A673 (cell line): ENCODE measurements at regions of chr2 and their contacts with region 1.

Region 1: GRCh38 chr2:3558205-3559014 is at the start of gene RNASEH1:
- DNase-seq: peak; percentile 99
- H3K4me3 ChIP-seq: peak within 1 kb of the TSS; percentile 99
- H3K27ac ChIP-seq: peak within 1 kb of the TSS; percentile 95
- H3K4me1 ChIP-seq: no peaks in the 10 kb centered on the region
- H3K27me3 ChIP-seq: no peaks in the 10 kb centered on the region
- CTCF ChIP-seq: no peak
- total RNA-seq, gene RNASEH1: 45.3 and 48.3 TPM in 2 replicates

Region 2: GRCh38 chr2:3545788-3546478 is 12.5 kb before region 1 on chr2:
- CTCF ChIA-PET with region 1: no interaction called
- POLR2A ChIA-PET with region 1: interaction called, 11 read pairs
- intact Hi-C with region 1: no loop called
- DNase-seq: no peak
- H3K4me3 ChIP-seq: no peak overlapping the region
- H3K27ac ChIP-seq: no peak overlapping the region
- H3K4me1 ChIP-seq: no peaks in the 10 kb centered on the region
- H3K27me3 ChIP-seq: no peaks in the 10 kb centered on the region
- CTCF ChIP-seq: no peak

Region 3: GRCh38 chr2:3575534-3576262 is 17.3 kb after region 1 on chr2:
- CTCF ChIA-PET with region 1: no interaction called
- POLR2A ChIA-PET with region 1: no interaction called
- intact Hi-C with region 1: loop called (anchors 1 kb)
- DNase-seq: no peak
- H3K4me3 ChIP-seq: peak overlapping the region; percentile 68
- H3K27ac ChIP-seq: peak overlapping the region; percentile 93
- H3K4me1 ChIP-seq: peaks cover 16% of the 10 kb centered on the region
- H3K27me3 ChIP-seq: no peaks in the 10 kb centered on the region
- CTCF ChIP-seq: no peak

Region 4: GRCh38 chr2:3594493-3595281 is 36.3 kb after region 1 on chr2 and contains the start of gene COLEC11:
- CTCF ChIA-PET with region 1: no interaction called
- POLR2A ChIA-PET with region 1: no interaction called
- intact Hi-C with region 1: no loop called
- DNase-seq: no peak
- H3K4me3 ChIP-seq: no peak within 1 kb of the TSS
- H3K27ac ChIP-seq: no peak within 1 kb of the TSS
- H3K4me1 ChIP-seq: no peaks in the 10 kb centered on the region
- H3K27me3 ChIP-seq: no peaks in the 10 kb centered on the region
- CTCF ChIP-seq: no peak
- total RNA-seq, gene COLEC11: 0.63 and 0.77 TPM in 2 replicates